AG04450 (cell line): ENCODE measurements at regions of chr15 and their contacts with region 1.

Region 1: DNA sequence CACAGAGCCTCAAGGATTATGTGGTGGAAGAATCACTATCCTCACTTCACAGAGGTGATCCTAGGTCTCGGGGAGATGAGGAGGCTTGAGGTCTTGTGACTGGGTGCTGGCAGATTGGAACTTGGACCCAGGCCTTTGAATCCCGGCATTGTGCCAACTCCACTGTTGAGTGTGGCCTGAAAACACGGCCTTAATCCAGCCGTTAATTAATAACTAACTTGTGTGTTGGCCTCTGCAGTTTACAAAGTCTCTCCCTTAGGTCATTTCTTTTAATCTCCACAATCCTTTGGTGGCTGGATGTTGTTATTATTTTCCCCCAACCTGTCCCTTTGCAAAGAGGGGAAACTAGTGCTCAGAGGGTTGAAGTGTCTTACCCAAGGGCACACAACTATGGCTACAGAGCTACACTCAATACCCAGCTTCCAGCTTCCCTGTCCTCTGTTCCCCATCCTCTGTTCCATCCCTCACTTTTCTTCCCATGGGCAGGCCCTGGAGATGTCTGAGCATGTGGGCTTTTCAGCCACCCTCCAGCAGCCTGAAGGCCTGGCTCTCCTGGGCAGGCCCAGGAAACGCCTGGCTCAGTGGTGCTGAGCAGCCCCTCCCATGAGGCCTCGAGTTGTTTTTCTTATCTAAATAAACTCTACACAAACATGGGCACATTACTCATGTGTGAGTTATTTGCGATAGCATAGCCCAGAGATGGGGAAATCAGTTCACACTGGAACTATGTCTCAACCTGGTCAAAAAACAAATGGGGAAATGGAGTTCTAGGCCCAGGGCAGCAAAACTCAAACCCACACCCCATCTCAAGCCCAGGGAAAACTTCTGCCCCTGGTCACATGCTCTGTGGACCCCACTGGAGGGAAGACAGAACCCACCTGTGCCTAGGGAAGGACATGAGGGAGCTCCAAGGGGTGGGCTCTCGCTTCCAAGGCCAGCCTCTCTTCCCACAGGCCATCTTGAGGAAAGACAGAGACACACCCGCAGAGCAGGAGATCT is 16.8 kb upstream of the SMAD3 start:
- DNase-seq: peak; percentile 89
- H3K4me3 ChIP-seq: no peak overlapping the region
- H3K27ac ChIP-seq: peak overlapping the region; percentile 100
- H3K27me3 ChIP-seq: no peaks in the 10 kb centered on the region
- CTCF ChIP-seq: no peak

Region 2: DNA sequence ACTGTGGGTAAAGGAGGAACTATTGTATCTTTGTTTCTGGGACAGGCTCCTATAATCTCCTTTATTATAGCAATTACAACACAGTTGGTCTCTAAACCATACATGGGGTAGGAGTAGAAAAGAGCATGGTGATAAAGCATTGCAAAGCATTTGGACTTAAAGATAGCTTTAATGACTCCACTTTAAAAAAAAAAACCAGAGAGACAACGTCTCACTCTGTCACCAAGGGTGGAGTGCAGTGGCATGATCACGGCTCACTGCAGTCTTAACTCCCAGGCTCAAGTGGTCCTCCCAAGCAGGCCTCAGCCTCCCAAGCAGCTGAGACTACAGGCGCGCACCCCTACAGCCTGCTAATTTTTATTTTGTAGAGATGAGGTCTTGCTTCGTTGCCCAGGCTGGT is 1324.7 kb before region 1 on chr15:
- CTCF ChIA-PET with region 1: no interaction called
- POLR2A ChIA-PET with region 1: no interaction called
- DNase-seq: no peak
- H3K4me3 ChIP-seq: no peak overlapping the region
- H3K27ac ChIP-seq: no peak overlapping the region
- H3K27me3 ChIP-seq: no peaks in the 10 kb centered on the region
- CTCF ChIP-seq: no peak

Region 3: GRCh38 chr15:66997212-66997611 is 51.4 kb before region 1 on chr15:
- CTCF ChIA-PET with region 1: no interaction called
- POLR2A ChIA-PET with region 1: no interaction called
- DNase-seq: peak; percentile 42
- H3K4me3 ChIP-seq: no peak overlapping the region
- H3K27ac ChIP-seq: no peak overlapping the region
- H3K27me3 ChIP-seq: no peaks in the 10 kb centered on the region
- CTCF ChIP-seq: no peak

Region 4: GRCh38 chr15:67024314-67024997 is 24.1 kb before region 1 on chr15:
- CTCF ChIA-PET with region 1: no interaction called
- POLR2A ChIA-PET with region 1: interaction called, 12 read pairs
- DNase-seq: peak; percentile 92
- H3K4me3 ChIP-seq: no peak overlapping the region
- H3K27ac ChIP-seq: peak overlapping the region; percentile 92
- H3K27me3 ChIP-seq: no peaks in the 10 kb centered on the region
- CTCF ChIP-seq: no peak

Region 5: DNA sequence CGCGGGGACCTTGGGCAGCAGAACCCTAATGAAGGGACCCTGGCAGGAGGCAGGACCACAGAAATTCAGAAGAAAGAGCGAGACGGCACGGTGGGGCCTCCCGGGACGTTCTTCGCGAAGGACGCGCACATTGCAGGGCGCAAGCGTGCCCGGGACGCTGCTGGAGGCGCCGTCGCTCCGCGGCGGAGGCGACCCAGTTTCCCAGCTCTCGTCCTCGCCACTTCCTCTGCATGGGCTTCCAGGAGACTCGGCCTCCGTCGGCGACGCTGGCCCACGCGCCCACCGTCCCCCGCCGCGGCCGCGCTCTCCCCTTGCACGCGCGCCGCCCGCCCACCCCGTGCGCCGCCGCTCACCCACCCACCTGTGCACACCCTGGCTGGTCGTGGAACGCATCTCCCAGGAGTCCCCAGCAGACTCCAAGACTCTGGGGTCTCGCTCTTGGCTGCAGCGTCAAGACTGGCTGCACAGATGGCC is 15.0 kb before region 1 on chr15:
- CTCF ChIA-PET with region 1: interaction called, 13 read pairs
- POLR2A ChIA-PET with region 1: no interaction called
- DNase-seq: no peak
- H3K4me3 ChIP-seq: no peak overlapping the region
- H3K27ac ChIP-seq: no peak overlapping the region
- H3K27me3 ChIP-seq: peaks cover 2% of the 10 kb centered on the region
- CTCF ChIP-seq: no peak

Region 6: GRCh38 chr15:67065444-67066093 is 17.0 kb after region 1 on chr15 and contains the start of gene SMAD3:
- CTCF ChIA-PET with region 1: no interaction called
- POLR2A ChIA-PET with region 1: interaction called, 25 read pairs
- DNase-seq: peak; percentile 91
- H3K4me3 ChIP-seq: peak within 1 kb of the TSS; percentile 99
- H3K27ac ChIP-seq: peak within 1 kb of the TSS; percentile 83
- H3K27me3 ChIP-seq: no peaks in the 10 kb centered on the region
- CTCF ChIP-seq: no peak
- polyA plus RNA-seq, gene SMAD3: 115 and 138 TPM in 2 replicates